ENCODE measurements at regions of chr7 and their contacts with region 1.

Region 1: DNA sequence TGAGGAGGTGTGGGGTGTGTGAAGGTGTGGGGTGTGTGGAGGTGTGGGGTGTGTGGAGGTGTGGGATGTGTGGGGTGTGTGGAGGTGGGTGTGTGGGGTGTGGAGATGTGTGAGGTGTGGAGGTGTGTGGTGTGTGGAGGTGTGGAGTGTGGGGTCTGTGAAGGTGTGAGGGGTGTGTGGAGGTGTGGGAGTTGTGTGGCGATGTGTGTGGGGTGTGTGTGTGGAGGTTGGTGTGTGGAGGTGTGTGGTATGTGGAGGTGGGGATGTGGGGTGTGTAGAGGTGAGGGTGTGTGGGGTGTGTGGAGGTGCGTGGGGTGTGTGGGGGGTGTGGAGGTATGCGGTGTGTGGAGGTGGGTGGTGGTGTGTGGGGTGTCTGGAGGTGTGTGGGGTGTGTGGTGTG is 34.8 kb downstream of the SPDYE17 start:
- DNase-seq: no peak
- ATAC-seq: peak; percentile 16
- H3K4me3 ChIP-seq: no peak overlapping the region
- H3K27ac ChIP-seq: no peak overlapping the region
- H3K4me1 ChIP-seq: no peaks in the 10 kb centered on the region
- H3K27me3 ChIP-seq: no peaks in the 10 kb centered on the region
- CTCF ChIP-seq: no peak
- POLR2A ChIP-seq: no peak

Region 2: GRCh38 chr7:76509931-76510877 is 487.2 kb before region 1 on chr7 and contains the start of gene UPK3B:
- intact Hi-C with region 1: loop called (anchors 10 kb)
- DNase-seq: peak in 2 of 4 donors; percentile 18 to 35
- ATAC-seq: peak; percentile 28
- H3K4me3 ChIP-seq: no peak within 1 kb of the TSS
- H3K27ac ChIP-seq: peak within 1 kb of the TSS in 1 of 4 donors; percentile 17
- H3K4me1 ChIP-seq: peaks cover 13% of the 10 kb centered on the region
- H3K27me3 ChIP-seq: no peaks in the 10 kb centered on the region
- CTCF ChIP-seq: no peak
- POLR2A ChIP-seq: no peak
- total RNA-seq, gene UPK3B: 2.3 to 7.3 TPM

Region 3: GRCh38 chr7:77199013-77199966 is 201.9 kb after region 1 on chr7 and contains the start of gene FGL2:
- intact Hi-C with region 1: no loop called
- DNase-seq: peak; percentile 20 to 63 (median 42)
- ATAC-seq: peak; percentile 65
- H3K4me3 ChIP-seq: no peak within 1 kb of the TSS
- H3K27ac ChIP-seq: peak within 1 kb of the TSS in 2 of 4 donors; percentile 17 to 24
- H3K4me1 ChIP-seq: peaks cover 6% of the 10 kb centered on the region
- H3K27me3 ChIP-seq: no peaks in the 10 kb centered on the region
- CTCF ChIP-seq: no peak
- POLR2A ChIP-seq: peak in 1 of 3 donors; percentile 70
- total RNA-seq, gene FGL2: 4.3 to 9.1 TPM

Measured in body of pancreas (tissue), 4 donors.